Heart right ventricle (tissue), 16 donors: ENCODE measurements at regions of chr11 and their contacts with region 1.

Region 1: GRCh38 chr11:14380947-14381561 is 22.1 kb upstream of the RRAS2 start:
- DNase-seq: peak; percentile 71 to 80
- ATAC-seq: peak; percentile 92 to 96 (median 95)
- H3K4me3 ChIP-seq: peak overlapping the region in 9 of 10 donors; percentile 36 to 63 (median 56)
- H3K27ac ChIP-seq: peak overlapping the region; percentile 62 to 92 (median 80)
- H3K4me1 ChIP-seq: peaks cover 0 to 25% (median 10%) of the 10 kb centered on the region in 9 donors
- H3K27me3 ChIP-seq: peaks cover 0 to 42% (median 0%) of the 10 kb centered on the region in 7 donors
- CTCF ChIP-seq: peak in 2 of 9 donors; percentile 17 to 33

Region 2: GRCh38 chr11:14249121-14249963 is 131.7 kb before region 1 on chr11:
- intact Hi-C with region 1: no loop called
- DNase-seq: peak; percentile 46 to 51
- ATAC-seq: peak; percentile 17 to 69 (median 48)
- H3K4me3 ChIP-seq: no peak overlapping the region
- H3K27ac ChIP-seq: no peak overlapping the region
- H3K4me1 ChIP-seq: peaks cover 0 to 20% (median 5%) of the 10 kb centered on the region in 9 donors
- H3K27me3 ChIP-seq: peaks cover 0 to 59% (median 16%) of the 10 kb centered on the region in 7 donors
- CTCF ChIP-seq: peak; percentile 83 to 95 (median 91)

Region 3: GRCh38 chr11:14300661-14301304 is 80.3 kb before region 1 on chr11:
- intact Hi-C with region 1: no loop called
- DNase-seq: peak in 1 of 2 donors; percentile 52
- ATAC-seq: peak; percentile 80 to 93 (median 87)
- H3K4me3 ChIP-seq: no peak overlapping the region
- H3K27ac ChIP-seq: no peak overlapping the region
- H3K4me1 ChIP-seq: peaks cover 0 to 42% (median 18%) of the 10 kb centered on the region in 9 donors
- H3K27me3 ChIP-seq: no peaks in the 10 kb centered on the region
- CTCF ChIP-seq: peak; percentile 65 to 85 (median 77)

Region 4: GRCh38 chr11:14422052-14422813 is 41.2 kb after region 1 on chr11:
- intact Hi-C with region 1: loop called in 1 of 10 experiments (anchors 5 kb)
- DNase-seq: peak; percentile 83
- ATAC-seq: peak; percentile 94 to 99 (median 97)
- H3K4me3 ChIP-seq: no peak overlapping the region
- H3K27ac ChIP-seq: peak overlapping the region in 9 of 10 donors; percentile 15 to 83 (median 76)
- H3K4me1 ChIP-seq: peaks cover 3 to 51% (median 16%) of the 10 kb centered on the region in 9 donors
- H3K27me3 ChIP-seq: no peaks in the 10 kb centered on the region
- CTCF ChIP-seq: no peak